RWPE1 (cell line): ENCODE measurements at regions of chr12 and their contacts with region 1.

Region 1: DNA sequence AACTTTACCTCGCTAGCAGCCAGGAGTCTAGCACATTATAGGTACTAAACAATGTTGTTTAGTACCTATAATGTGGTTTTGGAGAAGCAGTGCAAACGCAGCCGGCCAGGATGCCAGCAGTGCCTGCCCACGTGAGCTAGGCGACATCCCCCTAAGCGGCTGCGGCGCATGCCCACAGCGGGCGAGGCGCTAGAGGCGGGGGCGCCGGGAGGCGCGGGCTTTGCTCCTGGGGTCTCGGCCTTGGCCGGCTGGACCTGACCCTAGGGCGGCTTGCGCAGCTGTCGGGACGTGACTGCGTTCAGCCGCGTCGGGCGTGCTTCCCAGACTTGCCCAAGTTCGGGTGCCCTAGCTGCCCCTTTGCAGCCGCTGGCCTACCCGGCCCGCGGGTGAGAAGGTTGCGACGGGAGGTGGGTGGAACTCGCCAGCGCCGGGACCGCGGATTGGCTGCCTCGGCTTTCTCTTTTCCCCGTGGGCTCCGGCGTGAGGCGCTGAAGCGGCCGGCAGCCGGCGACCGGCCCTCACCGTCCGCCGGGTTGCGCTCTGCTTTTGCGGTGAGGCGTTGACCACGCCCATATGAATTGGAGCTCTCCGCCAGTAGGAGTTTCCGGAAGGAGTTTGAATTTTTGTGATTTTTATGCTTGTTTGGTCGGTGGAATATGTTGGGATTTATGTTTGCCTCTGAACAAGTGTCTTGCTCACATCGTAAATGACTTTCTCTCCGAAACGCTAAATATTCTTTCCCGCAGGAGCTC is at the start of gene TMEM19:
- DNase-seq: peak; percentile 89
- H3K27ac ChIP-seq: peak within 1 kb of the TSS; percentile 93
- CTCF ChIP-seq: peak; percentile 61

Region 2: DNA sequence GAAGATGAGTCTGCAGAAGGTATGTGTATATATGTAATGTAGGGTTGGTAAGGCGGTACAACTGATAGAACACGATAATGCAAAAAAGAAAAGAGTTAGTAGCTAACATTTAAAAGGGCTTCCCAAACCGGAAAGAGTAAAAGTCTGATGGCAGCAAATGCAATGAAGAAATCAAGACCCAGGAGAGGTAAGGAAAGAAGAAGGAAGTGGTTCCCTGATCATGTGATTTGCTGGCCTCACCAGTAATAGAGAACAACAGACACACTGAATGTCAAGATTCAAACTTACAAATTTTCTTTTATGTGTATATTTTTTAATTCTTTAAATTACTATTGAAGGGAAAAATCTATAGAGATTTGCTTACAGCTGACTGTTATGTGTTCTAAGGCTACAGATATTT is 40.8 kb before region 1 on chr12:
- CTCF ChIA-PET with region 1: no interaction called
- POLR2A ChIA-PET with region 1: no interaction called
- DNase-seq: no peak
- H3K27ac ChIP-seq: no peak overlapping the region
- CTCF ChIP-seq: no peak

Region 3: GRCh38 chr12:71663561-71664294 is 22.4 kb before region 1 on chr12 and contains the start of gene ZFC3H1:
- CTCF ChIA-PET with region 1: interaction called, 3 read pairs
- POLR2A ChIA-PET with region 1: interaction called, 19 read pairs
- DNase-seq: peak; percentile 93
- H3K27ac ChIP-seq: peak within 1 kb of the TSS; percentile 97
- CTCF ChIP-seq: no peak; the same call in 1 of the 2 replicates

Region 4: DNA sequence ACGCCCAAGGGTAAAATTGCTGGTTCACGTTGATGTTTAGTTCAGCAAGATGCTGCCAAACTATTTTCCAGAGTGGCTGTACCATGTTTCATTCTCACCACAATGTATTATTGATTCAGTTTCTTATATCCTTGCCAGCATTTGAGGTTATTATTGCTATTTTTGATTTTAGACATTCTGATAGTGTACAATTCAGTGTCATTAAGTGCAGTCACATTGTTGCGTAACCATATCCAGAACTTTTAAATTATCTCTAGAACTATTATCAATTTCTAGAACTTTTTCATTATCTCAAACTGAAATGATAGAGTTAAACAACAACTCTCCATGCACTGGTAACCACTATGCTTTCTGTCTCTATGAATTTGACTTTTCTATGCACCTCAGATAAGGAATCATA is 142.7 kb after region 1 on chr12:
- CTCF ChIA-PET with region 1: no interaction called
- POLR2A ChIA-PET with region 1: no interaction called
- DNase-seq: no peak
- H3K27ac ChIP-seq: no peak overlapping the region
- CTCF ChIP-seq: no peak